ENCODE measurements at regions of chr11 and their contacts with region 1.

Region 1: DNA sequence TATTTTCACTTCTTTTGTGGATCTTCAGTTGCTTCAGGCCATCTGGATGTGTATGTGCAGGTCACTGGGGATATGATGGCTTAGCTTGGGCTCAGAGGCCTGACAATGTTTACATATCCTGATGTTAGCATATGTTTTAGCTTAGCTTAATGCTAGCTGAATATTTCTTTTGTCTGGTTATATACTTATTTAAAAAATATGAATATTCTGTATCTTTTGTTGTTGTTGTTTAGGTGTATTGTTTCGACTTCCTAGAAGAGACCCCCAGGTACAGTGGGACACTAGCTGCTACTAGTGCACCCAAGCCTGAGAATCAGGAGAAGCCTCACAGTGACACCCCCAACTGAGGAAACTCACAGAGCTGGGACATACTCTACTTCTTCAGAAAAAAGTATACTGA is at the start of gene KDM4E:
- DNase-seq: no peak
- ATAC-seq: no peak
- H3K4me3 ChIP-seq: no peak within 1 kb of the TSS
- H3K4me3 Mint-ChIP-seq: no peak within 1 kb of the TSS
- H3K27ac ChIP-seq: no peak within 1 kb of the TSS
- H3K27ac Mint-ChIP-seq: no peak within 1 kb of the TSS
- H3K4me1 ChIP-seq: no peaks in the 10 kb centered on the region
- H3K4me1 Mint-ChIP-seq: no peaks in the 10 kb centered on the region
- H3K27me3 ChIP-seq: no peaks in the 10 kb centered on the region
- H3K27me3 Mint-ChIP-seq: no peaks in the 10 kb centered on the region
- CTCF ChIP-seq: no peak
- total RNA-seq, gene KDM4E: not detected

Region 2: DNA sequence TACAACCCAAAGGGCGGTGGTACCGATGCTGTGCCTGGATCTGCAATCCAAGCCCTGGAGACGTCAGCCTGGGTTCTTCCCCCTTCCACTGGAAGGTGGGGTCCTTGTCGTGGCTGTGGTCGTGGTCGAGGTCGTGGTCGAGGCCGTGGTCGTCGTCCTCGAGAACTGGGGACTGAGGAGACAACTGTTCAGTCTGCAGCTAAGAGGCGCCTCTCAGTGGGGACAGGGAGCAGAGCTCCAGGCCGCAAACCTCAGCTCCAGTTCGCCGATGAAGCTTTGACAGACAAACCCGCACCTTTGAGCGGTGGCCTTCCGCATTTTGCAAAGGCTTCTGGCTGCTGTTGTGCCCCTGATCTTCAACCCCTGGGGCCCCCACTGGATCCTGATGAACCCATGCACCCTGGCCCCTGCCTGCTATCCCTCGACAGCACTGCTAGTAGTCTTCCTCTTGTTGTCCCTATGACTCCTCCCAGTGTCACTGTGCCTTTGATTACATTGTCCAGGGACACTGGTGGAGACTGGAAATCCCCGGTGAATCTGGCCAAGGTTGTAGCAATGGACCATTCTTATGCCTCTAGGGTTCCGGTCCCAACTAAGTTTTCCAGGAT is 25.7 kb after region 1 on chr11:
- CTCF ChIA-PET with region 1: no interaction called
- POLR2A ChIA-PET with region 1: no interaction called
- intact Hi-C with region 1: loop called (anchors 1 to 2 kb)
- DNase-seq: no peak
- ATAC-seq: no peak
- H3K4me3 ChIP-seq: no peak overlapping the region
- H3K4me3 Mint-ChIP-seq: no peak overlapping the region
- H3K27ac ChIP-seq: no peak overlapping the region
- H3K27ac Mint-ChIP-seq: no peak overlapping the region
- H3K4me1 ChIP-seq: no peaks in the 10 kb centered on the region
- H3K4me1 Mint-ChIP-seq: no peaks in the 10 kb centered on the region
- H3K27me3 ChIP-seq: no peaks in the 10 kb centered on the region
- H3K27me3 Mint-ChIP-seq: peaks cover 53% of the 10 kb centered on the region
- CTCF ChIP-seq: no peak